ENCODE measurements at regions of chr15 and their contacts with region 1.

Region 1: DNA sequence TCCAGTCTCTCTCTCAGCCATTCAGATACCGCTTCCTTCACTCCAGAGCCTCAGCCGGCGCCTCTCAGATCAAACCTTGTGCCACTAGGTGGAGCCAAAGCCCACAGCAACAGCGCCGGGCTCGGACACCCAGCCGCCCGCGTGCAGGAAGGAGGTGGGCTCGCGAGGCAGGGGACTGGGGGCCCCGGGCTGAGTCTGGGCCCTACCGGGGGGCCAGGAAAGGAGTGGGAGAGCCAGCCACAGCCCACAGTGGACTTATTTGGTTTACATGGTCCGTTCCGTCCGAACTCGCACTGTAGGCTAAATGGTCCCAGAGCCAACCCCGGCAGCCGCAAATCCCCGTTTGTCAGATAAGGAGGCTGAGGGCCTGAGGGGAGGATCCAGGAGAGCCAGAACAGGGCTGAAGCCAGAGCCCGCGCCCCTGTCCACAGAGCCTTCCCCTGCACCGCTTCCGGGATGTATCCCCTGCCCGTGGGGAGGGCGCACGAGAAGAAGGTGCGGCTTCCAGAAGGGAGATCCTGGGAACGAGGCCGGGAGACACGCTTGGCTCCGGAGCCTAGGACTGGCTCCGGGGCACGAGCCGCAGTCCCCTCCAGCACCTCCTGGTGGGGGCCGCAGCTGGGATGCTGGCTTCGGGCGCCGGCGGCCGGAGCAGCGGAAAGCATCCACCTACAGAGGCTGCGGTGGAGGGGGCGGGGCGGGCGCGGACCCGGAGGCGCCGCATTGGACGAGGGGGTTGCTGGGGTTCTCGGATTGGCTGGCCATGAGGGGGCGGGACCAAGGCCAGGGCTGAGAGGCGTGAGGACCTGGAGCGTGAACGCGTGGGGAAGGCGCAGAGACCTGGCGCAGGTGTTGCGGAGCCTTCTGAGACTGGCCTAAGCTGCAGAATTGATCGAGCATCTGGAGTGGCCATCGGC is 6.5 kb upstream of the CYP11A1 start:
- DNase-seq: no peak
- ATAC-seq: peak; percentile 97
- H3K4me3 ChIP-seq: peak overlapping the region; percentile 69
- H3K27ac ChIP-seq: peak overlapping the region; percentile 49
- H3K4me1 ChIP-seq: peaks cover 32% of the 10 kb centered on the region
- H3K27me3 ChIP-seq: no peaks in the 10 kb centered on the region; a peak in 2 of 4 replicates
- CTCF ChIP-seq: peak; percentile 83 to 93 (median 84)
- EP300 ChIP-seq: no peak
- POLR2A ChIP-seq: peak; percentile 56; the same call in 1 of the 2 replicates
- RAD21 ChIP-seq: peak; percentile 99

Region 2: GRCh38 chr15:74407055-74407691 is 33.2 kb after region 1 on chr15:
- CTCF ChIA-PET with region 1: interaction called, 10 read pairs
- POLR2A ChIA-PET with region 1: interaction called, 302 read pairs
- RAD21 ChIA-PET with region 1: interaction called, 17 read pairs
- SMC1A ChIA-PET with region 1: interaction called, 11 read pairs
- in situ Hi-C with region 1: no loop called
- intact Hi-C with region 1: no loop called
- DNase-seq: no peak
- ATAC-seq: no peak
- H3K4me3 ChIP-seq: no peak overlapping the region
- H3K27ac ChIP-seq: no peak overlapping the region
- H3K4me1 ChIP-seq: peaks cover 41% of the 10 kb centered on the region
- H3K27me3 ChIP-seq: no peaks in the 10 kb centered on the region
- CTCF ChIP-seq: no peak
- EP300 ChIP-seq: no peak
- POLR2A ChIP-seq: no peak
- RAD21 ChIP-seq: no peak

Region 3: GRCh38 chr15:74433592-74434262 is 59.7 kb after region 1 on chr15 and contains the start of gene SEMA7A:
- CTCF ChIA-PET with region 1: interaction called, 655 read pairs
- POLR2A ChIA-PET with region 1: interaction called, 8 read pairs
- RAD21 ChIA-PET with region 1: interaction called, 19 read pairs
- SMC1A ChIA-PET with region 1: interaction called, 544 read pairs
- in situ Hi-C with region 1: no loop called
- intact Hi-C with region 1: loop called (anchors 1 kb)
- DNase-seq: peak; percentile 57
- ATAC-seq: peak; percentile 81
- H3K4me3 ChIP-seq: peak within 1 kb of the TSS; percentile 98
- H3K27ac ChIP-seq: peak within 1 kb of the TSS; percentile 87
- H3K4me1 ChIP-seq: peaks cover 32% of the 10 kb centered on the region
- H3K27me3 ChIP-seq: no peaks in the 10 kb centered on the region
- CTCF ChIP-seq: no peak
- EP300 ChIP-seq: peak in 1 of 2 experiments; percentile 25; a peak in 2 of 4 replicates
- POLR2A ChIP-seq: peak; percentile 98
- RAD21 ChIP-seq: no peak
- polyA plus RNA-seq, gene SEMA7A: 0.08 to 1.1 TPM

Region 4: DNA sequence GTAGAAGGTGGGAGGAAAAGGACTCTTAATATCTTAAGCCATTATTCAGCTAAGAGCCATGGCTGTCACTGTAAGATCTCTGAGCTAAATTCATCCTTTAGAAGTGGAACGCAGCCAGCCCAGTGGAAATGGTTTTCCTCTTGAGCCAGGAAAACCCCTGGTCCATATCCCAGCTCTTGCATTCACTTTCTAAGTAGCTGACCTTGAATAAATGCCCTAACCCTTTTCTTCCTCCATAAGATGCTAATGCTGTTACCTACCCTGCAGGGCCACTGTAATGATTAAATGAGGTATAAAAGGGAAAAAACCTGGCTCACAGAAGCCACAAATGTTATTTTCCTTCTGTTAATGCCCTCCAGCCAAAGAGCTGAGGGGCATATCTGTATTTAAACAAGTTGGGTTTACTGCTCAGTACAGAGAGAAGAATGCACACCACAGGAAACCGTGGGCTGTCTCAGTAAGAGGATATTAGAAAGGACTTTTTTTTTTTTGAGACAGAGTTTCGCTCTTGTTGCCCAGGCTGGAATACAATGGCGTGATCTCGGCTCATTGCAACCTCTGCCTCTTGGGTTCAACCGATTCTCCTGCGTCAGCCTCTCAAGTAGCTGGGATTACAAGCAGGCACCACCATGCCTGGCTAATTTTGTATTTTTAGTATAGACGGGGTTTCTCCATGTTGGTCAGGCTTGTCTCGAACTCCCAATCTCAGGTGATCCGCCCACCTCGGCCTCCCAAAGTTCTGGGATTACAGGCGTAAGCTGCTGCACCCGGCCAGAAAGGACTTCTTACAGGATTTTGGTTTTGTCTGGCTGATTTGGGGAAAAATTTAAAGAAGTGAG is 80.2 kb after region 1 on chr15:
- CTCF ChIA-PET with region 1: interaction called, 18 read pairs
- POLR2A ChIA-PET with region 1: no interaction called
- RAD21 ChIA-PET with region 1: interaction called, 3 read pairs
- SMC1A ChIA-PET with region 1: interaction called, 544 read pairs
- in situ Hi-C with region 1: no loop called
- intact Hi-C with region 1: no loop called
- DNase-seq: no peak
- ATAC-seq: peak; percentile 89
- H3K4me3 ChIP-seq: no peak overlapping the region
- H3K27ac ChIP-seq: peak overlapping the region; percentile 29
- H3K4me1 ChIP-seq: peaks cover 21% of the 10 kb centered on the region
- H3K27me3 ChIP-seq: no peaks in the 10 kb centered on the region
- CTCF ChIP-seq: no peak
- EP300 ChIP-seq: no peak
- POLR2A ChIP-seq: no peak
- RAD21 ChIP-seq: no peak

Region 5: GRCh38 chr15:74540761-74541493 is 166.9 kb after region 1 on chr15 and contains the start of gene ARID3B:
- CTCF ChIA-PET with region 1: interaction called, 9 read pairs
- POLR2A ChIA-PET with region 1: no interaction called
- RAD21 ChIA-PET with region 1: interaction called, 3 read pairs
- SMC1A ChIA-PET with region 1: interaction called, 3 read pairs
- in situ Hi-C with region 1: no loop called
- intact Hi-C with region 1: loop called (anchors 1 kb)
- DNase-seq: peak; percentile 93
- ATAC-seq: peak; percentile 88
- H3K4me3 ChIP-seq: peak within 1 kb of the TSS; percentile 99
- H3K27ac ChIP-seq: peak within 1 kb of the TSS; percentile 95
- H3K4me1 ChIP-seq: peaks cover 9% of the 10 kb centered on the region
- H3K27me3 ChIP-seq: no peaks in the 10 kb centered on the region
- CTCF ChIP-seq: no peak
- EP300 ChIP-seq: no peak
- POLR2A ChIP-seq: peak; percentile 91
- RAD21 ChIP-seq: no peak
- polyA plus RNA-seq, gene ARID3B: 1.1 to 1.8 TPM

Region 6: DNA sequence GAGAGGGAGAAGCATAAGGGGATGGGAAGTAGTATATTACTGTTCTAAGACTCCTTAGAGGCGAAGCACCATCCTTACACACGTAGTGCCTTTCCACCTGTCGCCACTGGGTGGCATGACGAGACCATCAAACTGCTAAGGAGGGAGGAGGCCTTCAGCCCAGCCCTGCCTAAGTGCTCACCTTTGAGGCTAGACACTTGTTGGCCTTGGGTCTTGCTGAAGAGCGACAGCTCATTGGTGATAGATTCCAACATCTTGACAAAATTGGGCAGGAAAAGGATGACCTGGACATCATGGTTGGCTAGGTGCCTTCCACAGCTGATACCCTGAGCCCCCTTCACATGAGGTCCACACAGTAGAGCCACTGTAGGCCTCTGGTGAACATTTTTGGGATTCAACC is 261.2 kb after region 1 on chr15:
- CTCF ChIA-PET with region 1: interaction called, 27 read pairs
- POLR2A ChIA-PET with region 1: interaction called, 4 read pairs
- RAD21 ChIA-PET with region 1: no interaction called
- SMC1A ChIA-PET with region 1: interaction called, 3 read pairs
- in situ Hi-C with region 1: no loop called
- intact Hi-C with region 1: loop called (anchors 1 kb)
- DNase-seq: no peak
- ATAC-seq: peak; percentile 91
- H3K4me3 ChIP-seq: no peak overlapping the region
- H3K27ac ChIP-seq: no peak overlapping the region
- H3K4me1 ChIP-seq: no peaks in the 10 kb centered on the region
- H3K27me3 ChIP-seq: no peaks in the 10 kb centered on the region
- CTCF ChIP-seq: peak; percentile 89 to 98 (median 95); a peak in 5 of 6 replicates
- EP300 ChIP-seq: no peak
- POLR2A ChIP-seq: 0 out of 2 replicates have a peak, but pooled peaks have one; percentile 12
- RAD21 ChIP-seq: peak; percentile 95

Region 7: DNA sequence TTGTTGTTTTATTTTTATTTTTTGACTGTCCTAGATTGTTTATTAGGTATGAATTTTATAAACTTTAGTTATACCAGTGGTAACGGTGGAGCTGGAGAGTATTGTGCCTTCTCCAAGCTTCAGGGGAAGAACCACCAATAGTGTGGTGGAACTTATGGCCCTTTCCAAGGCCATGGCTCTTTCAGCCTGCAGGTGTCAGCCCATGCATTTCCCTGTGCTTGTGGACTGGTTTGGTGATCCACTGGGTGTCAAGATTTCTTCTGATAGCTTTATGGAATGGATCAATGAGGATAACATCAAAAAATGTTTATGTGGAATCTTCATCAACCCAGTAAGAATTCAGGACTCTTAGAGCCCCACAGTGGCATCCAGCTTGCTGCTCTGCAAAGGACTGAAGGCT is 602.2 kb after region 1 on chr15:
- CTCF ChIA-PET with region 1: no interaction called
- POLR2A ChIA-PET with region 1: no interaction called
- RAD21 ChIA-PET with region 1: no interaction called
- SMC1A ChIA-PET with region 1: no interaction called
- in situ Hi-C with region 1: no loop called
- intact Hi-C with region 1: no loop called
- DNase-seq: no peak
- ATAC-seq: no peak
- H3K4me3 ChIP-seq: no peak overlapping the region
- H3K27ac ChIP-seq: no peak overlapping the region
- H3K4me1 ChIP-seq: no peaks in the 10 kb centered on the region
- H3K27me3 ChIP-seq: no peaks in the 10 kb centered on the region
- CTCF ChIP-seq: peak in 1 of 3 experiments; percentile 13; a peak in 2 of 6 replicates
- EP300 ChIP-seq: no peak
- POLR2A ChIP-seq: no peak
- RAD21 ChIP-seq: peak; percentile 25; the same call in 1 of the 2 replicates

Measured in GM12878 (cell line).